ENCODE measurements at regions of chr11 and their contacts with region 1.

Region 1: GRCh38 chr11:43580735-43581369 is 99.7 kb upstream of the HSD17B12 start:
- DNase-seq: peak; percentile 81
- H3K4me3 ChIP-seq: peak overlapping the region; percentile 80
- H3K27ac ChIP-seq: no peak overlapping the region
- H3K4me1 ChIP-seq: peaks cover 11% of the 10 kb centered on the region
- H3K27me3 ChIP-seq: peaks cover 25% of the 10 kb centered on the region

Region 2: DNA sequence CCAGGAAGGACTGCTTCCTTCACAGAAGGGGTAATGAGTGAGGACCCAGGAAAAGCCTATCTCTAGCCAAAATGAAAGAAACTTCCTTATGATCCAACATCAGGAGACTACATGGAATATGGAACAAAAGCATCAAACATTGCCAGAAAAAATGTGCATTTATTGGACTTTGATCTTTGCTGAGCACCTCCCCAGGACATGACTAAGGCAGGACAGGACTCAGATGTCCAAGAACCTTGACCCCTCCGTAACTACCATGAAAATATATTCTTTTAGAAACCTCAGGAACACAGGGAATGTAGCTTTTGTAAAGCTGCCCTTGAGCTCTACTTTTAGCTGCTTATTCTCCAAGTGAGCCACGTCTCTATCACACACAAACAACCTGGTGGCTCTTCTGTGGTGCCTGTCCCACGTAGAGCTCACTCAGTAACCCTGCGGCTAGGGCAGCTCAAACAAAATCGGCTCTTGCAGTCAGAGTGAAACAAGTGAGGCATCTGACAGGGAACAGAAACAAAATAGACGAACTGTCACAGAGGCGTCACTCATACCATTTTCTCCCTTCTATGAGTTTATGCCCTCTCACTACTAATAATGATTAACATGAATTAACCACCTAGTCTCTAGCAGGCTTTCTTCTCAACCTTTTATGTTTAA is 740.5 kb before region 1 on chr11:
- in situ Hi-C with region 1: no loop called
- DNase-seq: no peak
- H3K4me3 ChIP-seq: no peak overlapping the region
- H3K27ac ChIP-seq: no peak overlapping the region
- H3K4me1 ChIP-seq: no peaks in the 10 kb centered on the region
- H3K27me3 ChIP-seq: no peaks in the 10 kb centered on the region

Region 3: GRCh38 chr11:43467958-43468357 is 112.9 kb before region 1 on chr11:
- in situ Hi-C with region 1: no loop called
- DNase-seq: peak; percentile 13
- H3K4me3 ChIP-seq: no peak overlapping the region
- H3K27ac ChIP-seq: no peak overlapping the region
- H3K4me1 ChIP-seq: no peaks in the 10 kb centered on the region
- H3K27me3 ChIP-seq: no peaks in the 10 kb centered on the region

Region 4: DNA sequence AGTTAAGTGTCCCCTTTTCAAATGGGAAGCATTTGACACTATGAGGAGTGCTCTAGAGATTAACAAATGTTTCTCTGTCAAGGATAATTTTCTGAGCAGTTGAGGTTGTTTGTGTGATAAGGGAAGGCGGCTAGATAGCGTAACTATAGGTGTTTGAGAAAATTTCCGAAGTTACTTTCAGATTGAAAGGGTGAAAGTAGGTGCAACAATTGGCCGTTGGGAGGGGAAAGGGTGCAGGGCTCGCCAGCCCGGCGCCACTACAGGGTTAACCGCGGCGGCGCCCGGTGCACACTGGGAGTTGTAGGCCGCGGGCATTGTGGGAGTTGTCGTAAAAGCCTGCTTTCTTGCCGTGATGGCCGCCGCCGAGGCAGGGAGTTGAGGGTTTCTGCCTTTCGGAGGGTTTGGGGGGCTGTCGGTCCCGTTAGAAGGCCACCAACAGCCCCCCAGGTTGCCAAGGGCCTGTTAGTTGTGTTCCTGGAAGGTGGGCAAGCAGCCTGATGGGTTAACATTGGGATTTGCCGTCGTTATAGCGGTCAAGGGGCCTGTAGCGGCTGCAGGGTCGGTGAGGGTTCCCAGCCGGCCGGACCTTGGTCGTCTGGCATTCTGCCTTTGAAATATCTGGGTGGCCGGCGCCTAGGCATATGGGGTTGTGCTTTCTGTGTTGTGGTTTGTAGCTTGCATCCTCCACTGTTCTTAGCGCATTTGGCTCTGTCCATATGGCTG is 63.2 kb after region 1 on chr11:
- in situ Hi-C with region 1: loop called (anchors 10 kb)
- DNase-seq: peak; percentile 96
- H3K4me3 ChIP-seq: peak overlapping the region; percentile 94
- H3K27ac ChIP-seq: peak overlapping the region; percentile 28
- H3K4me1 ChIP-seq: peaks cover 8% of the 10 kb centered on the region; the same call in 1 of the 2 replicates
- H3K27me3 ChIP-seq: peaks cover 1% of the 10 kb centered on the region; the same call in 1 of the 2 replicates

Measured in GM23248 (cell line).